ENCODE measurements at regions of chr2 and their contacts with region 1.

Region 1: DNA sequence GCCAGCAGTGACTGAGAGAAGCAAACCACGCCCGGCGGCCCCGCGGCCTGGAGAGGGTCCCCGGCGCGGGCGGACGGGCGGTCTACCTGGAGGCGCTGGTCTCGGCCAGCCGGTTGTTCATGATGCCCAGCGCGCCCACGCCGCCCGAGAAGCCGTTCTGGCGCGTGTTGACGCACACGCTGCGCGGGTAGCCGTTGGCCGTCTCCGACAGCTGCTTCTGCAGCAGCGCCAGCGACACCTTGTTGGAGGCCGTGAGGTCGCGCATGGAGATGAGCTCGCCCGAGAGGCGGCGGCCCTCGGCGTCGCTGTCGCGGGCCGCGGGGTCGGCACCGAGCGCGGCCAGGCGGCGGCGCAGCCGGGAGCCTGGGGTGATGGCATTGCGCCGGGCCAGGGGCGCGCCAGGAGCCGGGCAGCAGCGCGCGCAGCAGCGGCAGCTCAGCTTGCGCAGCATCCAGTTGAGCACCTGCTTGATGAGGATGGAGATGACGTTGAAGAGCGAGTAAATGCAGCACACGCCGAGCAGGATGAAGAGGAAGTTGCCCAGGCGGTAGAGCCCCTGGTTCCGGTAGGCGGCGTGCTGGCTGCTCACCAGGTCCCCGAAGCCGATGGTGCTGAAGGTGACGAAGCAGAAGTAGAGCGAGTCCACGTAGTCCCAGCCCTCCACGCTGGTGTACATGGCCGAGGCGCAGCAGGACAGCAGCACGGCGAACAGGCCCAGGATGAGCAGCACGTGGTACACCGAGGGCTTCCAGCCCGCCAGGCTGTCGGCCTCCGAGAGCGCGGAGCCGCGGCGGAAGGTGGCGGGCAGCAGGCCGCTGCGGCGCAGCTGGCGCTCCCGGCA is 118.1 kb downstream of the MSH2 start:
- DNase-seq: peak; percentile 57 to 83 (median 72)
- H3K4me3 ChIP-seq: peak overlapping the region; percentile 45 to 75 (median 59)
- H3K27ac ChIP-seq: peak overlapping the region in 58 of 59 donors; percentile 37 to 95 (median 83)
- H3K27me3 ChIP-seq: peaks cover 0 to 2% (median 0%) of the 10 kb centered on the region in 45 donors
- CTCF ChIP-seq: peak in 47 of 56 donors; percentile 14 to 74 (median 44)

Region 2: DNA sequence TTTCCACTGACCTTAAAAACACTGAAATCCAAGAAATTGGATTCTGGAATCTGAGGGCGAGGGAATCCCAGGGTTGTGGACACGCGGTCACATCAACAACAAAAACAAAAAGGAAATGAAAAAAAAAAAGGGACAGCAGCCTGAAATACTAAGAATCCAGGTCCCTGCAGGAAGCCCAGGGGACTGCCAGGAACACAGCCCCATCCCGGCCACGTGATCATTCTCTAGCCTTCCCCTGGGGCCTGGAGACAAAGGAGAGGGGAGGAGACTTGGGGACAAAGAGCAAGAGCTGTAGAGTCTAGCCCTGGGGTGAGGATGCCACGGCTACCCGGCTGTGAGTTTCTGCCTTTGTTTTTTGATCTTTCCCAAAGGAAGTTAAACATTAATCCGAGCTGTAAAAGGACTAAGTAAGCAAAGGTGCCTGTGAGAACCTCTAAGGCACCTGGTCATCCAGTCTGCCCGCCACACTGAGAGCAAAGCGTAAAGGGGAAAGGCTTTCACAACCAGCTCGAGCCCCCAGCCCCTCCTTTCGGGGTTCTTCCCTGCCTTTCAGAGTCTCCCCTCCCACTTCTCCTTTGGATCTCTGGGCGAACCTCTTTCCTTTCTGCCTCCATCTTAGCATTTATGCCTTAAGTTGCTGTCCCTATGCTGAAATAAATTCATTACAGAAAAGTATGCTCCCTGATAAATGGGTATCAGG is 176.0 kb before region 1 on chr2:
- intact Hi-C with region 1: loop called in 1 of 2 experiments (anchors 10 kb)
- DNase-seq: peak; percentile 69 to 93 (median 90)
- H3K4me3 ChIP-seq: peak overlapping the region; percentile 27 to 76 (median 58)
- H3K27ac ChIP-seq: peak overlapping the region; percentile 42 to 97 (median 88)
- H3K27me3 ChIP-seq: no peaks in the 10 kb centered on the region
- CTCF ChIP-seq: peak in 40 of 56 donors; percentile 10 to 60 (median 36)

Region 3: DNA sequence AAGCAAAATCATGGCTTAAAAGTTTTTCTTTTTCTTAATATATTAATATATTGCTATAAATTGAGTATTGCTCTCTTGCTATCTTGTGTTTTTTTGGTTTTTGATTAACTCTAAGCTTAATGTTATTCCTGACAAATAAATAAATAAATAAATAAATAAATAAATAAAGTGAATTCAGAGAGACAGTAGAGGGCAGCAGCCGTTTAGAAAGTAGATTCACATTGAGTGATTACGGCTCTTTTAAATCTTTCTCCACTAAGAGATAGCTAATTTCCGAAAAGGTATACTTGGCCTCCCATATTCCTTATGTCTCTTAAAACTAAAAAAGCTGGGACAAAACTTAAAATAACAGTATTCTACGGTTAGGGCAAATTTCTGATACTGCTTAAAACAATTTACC is 83.8 kb before region 1 on chr2:
- intact Hi-C with region 1: loop called in 1 of 2 experiments (anchors 2 kb)
- DNase-seq: peak in 1 of 10 donors; percentile 18
- H3K4me3 ChIP-seq: peak overlapping the region in 17 of 59 donors; percentile 1 to 36 (median 18)
- H3K27ac ChIP-seq: peak overlapping the region in 1 of 59 donors; percentile 12
- H3K27me3 ChIP-seq: no peaks in the 10 kb centered on the region
- CTCF ChIP-seq: peak; percentile 13 to 88 (median 67)

Region 4: DNA sequence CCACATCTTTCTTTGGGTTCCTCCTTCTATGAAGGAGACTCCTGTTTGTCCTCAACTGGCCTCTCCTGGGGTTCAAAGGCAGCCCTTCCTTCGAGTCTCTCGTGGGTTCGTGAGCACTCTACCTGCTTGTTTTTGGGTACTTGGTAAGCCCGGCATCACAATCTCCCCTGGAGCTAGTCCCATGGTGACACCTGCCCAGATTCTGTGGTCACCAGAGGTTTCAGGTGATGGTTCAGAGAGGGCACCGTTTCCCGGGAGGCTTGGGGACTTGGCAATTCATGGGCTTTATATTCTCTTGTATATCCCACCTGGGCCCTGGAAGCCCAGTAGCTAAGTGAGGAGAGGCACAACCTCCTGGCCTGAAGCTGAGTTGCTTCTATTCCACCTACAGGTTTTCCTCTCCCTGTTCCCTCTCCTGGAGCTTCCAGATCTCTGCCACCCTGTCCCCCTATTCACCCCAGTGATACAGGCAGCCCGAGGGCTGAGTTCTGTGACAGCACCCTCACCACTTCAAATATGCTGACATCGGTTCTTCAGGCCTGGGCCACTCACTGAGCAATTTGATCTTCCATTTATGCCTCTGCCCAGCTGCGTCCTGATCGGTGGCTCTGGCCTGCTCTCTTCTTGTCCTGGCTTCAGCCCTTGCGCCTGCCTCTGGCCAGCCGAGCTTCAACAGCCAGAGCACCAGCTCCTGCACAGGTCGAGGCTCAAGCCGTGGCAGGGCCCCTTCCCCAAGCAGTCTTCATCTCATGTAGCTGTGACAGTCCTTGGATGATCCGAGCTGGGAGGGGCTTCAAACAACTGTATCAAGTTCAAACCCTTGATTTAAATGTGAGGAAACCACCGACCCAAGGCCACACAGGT is 26.5 kb before region 1 on chr2:
- intact Hi-C with region 1: loop called in 1 of 2 experiments (anchors 1 kb)
- DNase-seq: no peak
- H3K4me3 ChIP-seq: no peak overlapping the region
- H3K27ac ChIP-seq: no peak overlapping the region
- H3K27me3 ChIP-seq: no peaks in the 10 kb centered on the region
- CTCF ChIP-seq: no peak

Region 5: GRCh38 chr2:47569658-47570472 is 48.8 kb after region 1 on chr2:
- intact Hi-C with region 1: loop called in 1 of 2 experiments (anchors 5 kb)
- DNase-seq: peak in 3 of 10 donors; percentile 51 to 63 (median 58)
- H3K4me3 ChIP-seq: peak overlapping the region; percentile 37 to 77 (median 64)
- H3K27ac ChIP-seq: peak overlapping the region in 40 of 59 donors; percentile 16 to 85 (median 62)
- H3K27me3 ChIP-seq: peaks cover 0 to 47% (median 11%) of the 10 kb centered on the region in 45 donors
- CTCF ChIP-seq: no peak

Region 6: GRCh38 chr2:47767880-47768609 is 247.0 kb after region 1 on chr2:
- intact Hi-C with region 1: loop called (anchors 5 to 10 kb)
- DNase-seq: peak; percentile 54 to 87 (median 72)
- H3K4me3 ChIP-seq: peak overlapping the region in 36 of 59 donors; percentile 4 to 51 (median 32)
- H3K27ac ChIP-seq: peak overlapping the region in 9 of 59 donors; percentile 22 to 75 (median 32)
- H3K27me3 ChIP-seq: peaks cover 0 to 2% (median 0%) of the 10 kb centered on the region in 45 donors
- CTCF ChIP-seq: peak in 55 of 56 donors; percentile 80 to 100 (median 100)

Measured in dorsolateral prefrontal cortex (tissue), 120 donors.